ENCODE measurements at regions of chr10 and their contacts with region 1.

Region 1: DNA sequence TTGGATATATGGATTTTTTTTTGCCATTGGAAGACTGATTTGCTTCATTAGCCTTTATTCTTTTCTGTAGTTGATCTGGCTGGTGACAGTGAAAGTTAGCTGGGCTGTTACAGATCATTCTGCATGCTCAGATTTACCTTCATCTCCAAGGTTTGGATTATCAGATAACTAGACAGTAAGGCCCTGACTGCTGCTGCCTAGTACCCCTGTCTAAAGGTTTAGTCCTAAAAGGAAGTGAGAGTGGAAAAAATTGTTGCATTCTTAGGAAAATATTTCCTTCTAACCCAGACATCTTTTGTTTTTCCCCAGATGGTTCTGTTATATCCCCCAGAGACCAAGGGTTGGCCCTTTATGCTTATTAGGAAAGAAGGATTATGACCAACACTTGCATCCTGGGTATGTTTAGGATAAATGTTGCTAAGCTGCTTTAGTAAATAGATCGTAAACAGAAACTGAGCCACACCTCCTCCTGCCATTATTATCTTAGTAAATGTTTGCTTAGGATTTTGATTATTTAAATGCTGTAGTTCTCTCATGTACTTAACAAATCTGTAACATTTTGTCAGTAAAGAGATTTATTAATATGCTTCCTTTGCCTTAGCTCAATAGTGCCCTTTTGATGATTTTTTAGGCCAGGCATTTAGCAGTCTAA is 44.4 kb downstream of the MCU start:
- DNase-seq: no peak
- ATAC-seq: peak; percentile 36
- H3K4me3 ChIP-seq: no peak overlapping the region
- H3K27ac ChIP-seq: peak overlapping the region; percentile 75 to 82
- H3K4me1 ChIP-seq: no peaks in the 10 kb centered on the region
- H3K27me3 ChIP-seq: no peaks in the 10 kb centered on the region

Region 2: GRCh38 chr10:72692057-72692910 is 44.0 kb before region 1 on chr10 and contains the start of gene MCU:
- intact Hi-C with region 1: loop called in 1 of 2 experiments (anchors 5 kb)
- DNase-seq: peak; percentile 96 to 98
- ATAC-seq: peak; percentile 96
- H3K4me3 ChIP-seq: peak within 1 kb of the TSS; percentile 80 to 87
- H3K27ac ChIP-seq: peak within 1 kb of the TSS; percentile 92 to 98
- H3K4me1 ChIP-seq: peaks cover 5% of the 10 kb centered on the region in 2 donors
- H3K27me3 ChIP-seq: no peaks in the 10 kb centered on the region
- total RNA-seq, gene MCU: 31.5 to 45.6 TPM

Region 3: DNA sequence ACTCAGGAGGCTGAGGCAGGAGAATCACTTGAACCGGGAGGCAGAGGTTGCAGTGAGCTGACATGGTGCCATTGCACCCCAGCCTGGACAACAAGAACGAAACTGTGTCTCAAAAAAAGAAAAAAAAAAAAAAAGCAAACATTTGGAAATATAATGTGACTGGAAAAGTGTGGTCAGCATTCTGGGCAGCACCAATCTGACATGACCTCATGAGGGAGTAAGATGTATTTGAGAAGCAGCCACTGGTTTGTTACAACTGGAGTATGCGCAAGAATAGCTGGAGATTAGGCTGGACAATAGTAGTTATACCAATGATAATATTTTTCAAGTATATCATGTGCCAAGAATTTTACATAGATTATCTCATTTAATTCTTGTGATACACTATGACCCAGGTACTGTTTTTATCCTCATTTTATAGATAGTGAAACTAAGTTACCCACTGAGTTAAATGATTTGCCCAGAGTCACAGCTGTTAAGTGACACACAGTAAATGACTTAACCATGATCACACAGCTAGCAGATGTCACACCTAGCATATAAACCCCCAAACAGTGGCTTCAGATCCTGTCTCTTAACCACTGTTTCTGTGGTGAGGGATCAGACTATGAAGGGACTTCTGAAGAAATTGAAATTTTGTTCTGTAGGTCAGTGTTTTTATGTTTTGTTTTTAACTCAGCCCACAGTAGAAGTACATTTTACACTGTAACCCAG is 33.3 kb before region 1 on chr10:
- intact Hi-C with region 1: loop called in 1 of 2 experiments (anchors 5 kb)
- DNase-seq: no peak
- ATAC-seq: peak; percentile 84
- H3K4me3 ChIP-seq: no peak overlapping the region
- H3K27ac ChIP-seq: peak overlapping the region in 1 of 2 donors; percentile 76
- H3K4me1 ChIP-seq: no peaks in the 10 kb centered on the region
- H3K27me3 ChIP-seq: no peaks in the 10 kb centered on the region